ENCODE measurements at regions of chr1 and their contacts with region 1.

Region 1: GRCh38 chr1:108512239-108512981 is 47.5 kb upstream of the EEIG2 start:
- DNase-seq: no peak
- H3K4me3 ChIP-seq: no peak overlapping the region
- H3K27ac ChIP-seq: no peak overlapping the region
- H3K4me1 ChIP-seq: no peaks in the 10 kb centered on the region
- H3K27me3 ChIP-seq: no peaks in the 10 kb centered on the region
- CTCF ChIP-seq: peak in 2 of 3 experiments; percentile 55 to 67; a peak in 2 of 4 replicates
- EP300 ChIP-seq: no peak
- POLR2A ChIP-seq: no peak
- RAD21 ChIP-seq: peak; percentile 89 to 93

Region 2: GRCh38 chr1:108533351-108534083 is 21.1 kb after region 1 on chr1:
- CTCF ChIA-PET with region 1: interaction called, 11 read pairs
- POLR2A ChIA-PET with region 1: no interaction called
- DNase-seq: no peak
- H3K4me3 ChIP-seq: no peak overlapping the region
- H3K27ac ChIP-seq: no peak overlapping the region
- H3K4me1 ChIP-seq: peaks cover 0 to 2% (median 0%) of the 10 kb centered on the region in 4 experiments; a peak in 2 of 7 replicates
- H3K27me3 ChIP-seq: no peaks in the 10 kb centered on the region
- CTCF ChIP-seq: no peak
- EP300 ChIP-seq: no peak
- POLR2A ChIP-seq: no peak
- RAD21 ChIP-seq: no peak

Region 3: GRCh38 chr1:108570128-108570527 is 57.7 kb after region 1 on chr1:
- CTCF ChIA-PET with region 1: interaction called, 127 read pairs
- POLR2A ChIA-PET with region 1: no interaction called
- DNase-seq: no peak
- H3K4me3 ChIP-seq: no peak overlapping the region
- H3K27ac ChIP-seq: no peak overlapping the region
- H3K4me1 ChIP-seq: no peaks in the 10 kb centered on the region
- H3K27me3 ChIP-seq: no peaks in the 10 kb centered on the region
- CTCF ChIP-seq: peak; percentile 7 to 76 (median 57)
- EP300 ChIP-seq: no peak
- POLR2A ChIP-seq: no peak
- RAD21 ChIP-seq: peak; percentile 62 to 68

Region 4: DNA sequence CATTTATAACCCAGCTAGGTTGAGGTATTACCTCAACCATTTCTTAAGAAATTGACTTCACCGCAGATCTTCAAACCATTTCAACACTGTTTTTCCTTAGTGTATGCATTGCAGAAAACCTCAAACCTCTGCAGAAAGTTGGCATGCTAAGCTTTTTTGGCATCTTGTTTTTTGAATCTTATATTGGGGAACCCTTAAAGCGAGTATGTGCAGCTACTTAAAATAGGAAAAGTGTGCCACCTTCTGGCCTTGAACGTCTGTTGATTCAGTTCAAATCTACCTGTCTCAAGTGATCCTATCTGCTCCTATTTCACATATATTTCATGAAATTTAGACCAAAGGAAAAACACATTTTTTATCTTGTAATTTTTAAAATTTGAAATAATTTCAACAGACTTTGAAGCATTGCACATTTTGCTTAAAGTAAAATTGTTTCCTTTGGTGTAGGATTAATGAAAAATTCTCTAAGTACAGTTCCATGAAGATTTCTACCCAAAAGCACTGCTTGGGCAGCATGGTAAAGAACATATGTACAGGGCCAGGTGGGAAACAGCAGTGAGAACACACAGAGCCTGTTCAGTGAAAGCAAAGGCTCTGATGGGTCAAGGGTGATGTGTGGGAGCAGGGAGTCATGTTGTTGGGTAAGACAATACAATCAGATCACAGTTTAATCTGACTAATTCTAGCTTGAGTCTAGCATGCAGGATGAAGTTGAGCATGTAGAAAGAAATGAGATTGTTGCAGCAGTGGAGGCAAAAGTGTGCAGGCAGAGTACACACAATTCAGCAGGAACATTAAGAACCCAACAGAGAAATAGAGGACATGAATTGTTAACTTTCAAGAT is 131.3 kb after region 1 on chr1:
- CTCF ChIA-PET with region 1: interaction called, 15 read pairs
- POLR2A ChIA-PET with region 1: no interaction called
- DNase-seq: no peak
- H3K4me3 ChIP-seq: no peak overlapping the region
- H3K27ac ChIP-seq: no peak overlapping the region
- H3K4me1 ChIP-seq: no peaks in the 10 kb centered on the region
- H3K27me3 ChIP-seq: peaks cover 0 to 1% (median 0%) of the 10 kb centered on the region in 4 experiments; a peak in 1 of 7 replicates
- CTCF ChIP-seq: peak in 2 of 3 experiments; percentile 35 to 57; a peak in 2 of 4 replicates
- EP300 ChIP-seq: no peak
- POLR2A ChIP-seq: no peak
- RAD21 ChIP-seq: peak; percentile 77 to 79

Measured in H1 (cell line).